ENCODE measurements at regions of chr15 and their contacts with region 1.

Region 1: GRCh38 chr15:89408372-89409183 is 74.0 kb upstream of the POLG start:
- DNase-seq: no peak
- H3K4me3 Mint-ChIP-seq: peak overlapping the region; percentile 87
- H3K27ac Mint-ChIP-seq: peak overlapping the region; percentile 71
- H3K4me1 Mint-ChIP-seq: peaks cover 39% of the 10 kb centered on the region
- H3K27me3 Mint-ChIP-seq: peaks cover 92% of the 10 kb centered on the region

Region 2: GRCh38 chr15:89221543-89221942 is 187.0 kb before region 1 on chr15 and contains the start of gene RLBP1:
- intact Hi-C with region 1: no loop called
- DNase-seq: no peak
- H3K4me3 Mint-ChIP-seq: no peak within 1 kb of the TSS
- H3K27ac Mint-ChIP-seq: no peak within 1 kb of the TSS
- H3K4me1 Mint-ChIP-seq: no peaks in the 10 kb centered on the region
- H3K27me3 Mint-ChIP-seq: peaks cover 9% of the 10 kb centered on the region
- total RNA-seq, gene RLBP1: not detected in 2 replicates

Region 3: GRCh38 chr15:89367485-89368451 is 40.8 kb before region 1 on chr15:
- intact Hi-C with region 1: loop called (anchors 2 kb)
- DNase-seq: no peak
- H3K4me3 Mint-ChIP-seq: peak overlapping the region; percentile 37
- H3K27ac Mint-ChIP-seq: no peak overlapping the region
- H3K4me1 Mint-ChIP-seq: no peaks in the 10 kb centered on the region
- H3K27me3 Mint-ChIP-seq: peaks cover 81% of the 10 kb centered on the region

Region 4: GRCh38 chr15:89374086-89374981 is 34.2 kb before region 1 on chr15:
- intact Hi-C with region 1: loop called (anchors 1 kb)
- DNase-seq: no peak
- H3K4me3 Mint-ChIP-seq: no peak overlapping the region
- H3K27ac Mint-ChIP-seq: no peak overlapping the region
- H3K4me1 Mint-ChIP-seq: no peaks in the 10 kb centered on the region
- H3K27me3 Mint-ChIP-seq: peaks cover 75% of the 10 kb centered on the region

Region 5: DNA sequence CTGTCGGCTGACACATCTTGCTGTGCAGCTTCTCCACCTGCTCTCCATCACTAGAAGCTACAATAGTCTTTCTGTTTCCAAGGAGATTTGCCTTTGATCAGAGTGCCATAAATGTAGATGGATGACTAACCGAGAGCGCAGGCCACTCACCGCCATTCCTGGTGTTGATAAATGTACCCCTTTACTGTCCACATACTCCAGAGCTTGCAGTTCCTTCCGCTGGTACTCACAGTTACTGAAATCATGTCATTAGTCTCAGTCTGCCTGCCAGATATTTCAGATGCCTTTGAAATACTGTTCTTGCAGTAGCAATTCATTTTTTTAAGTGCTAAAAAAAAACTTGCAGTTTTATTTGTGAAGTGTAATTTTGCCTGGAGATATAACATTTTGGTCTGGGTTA is 1380.9 kb after region 1 on chr15:
- intact Hi-C with region 1: no loop called
- DNase-seq: no peak
- H3K4me3 Mint-ChIP-seq: no peak overlapping the region
- H3K27ac Mint-ChIP-seq: peak overlapping the region; percentile 23
- H3K4me1 Mint-ChIP-seq: peaks cover 32% of the 10 kb centered on the region
- H3K27me3 Mint-ChIP-seq: no peaks in the 10 kb centered on the region